PC-9 (cell line): ENCODE measurements at regions of chr7 and their contacts with region 1.

Region 1: DNA sequence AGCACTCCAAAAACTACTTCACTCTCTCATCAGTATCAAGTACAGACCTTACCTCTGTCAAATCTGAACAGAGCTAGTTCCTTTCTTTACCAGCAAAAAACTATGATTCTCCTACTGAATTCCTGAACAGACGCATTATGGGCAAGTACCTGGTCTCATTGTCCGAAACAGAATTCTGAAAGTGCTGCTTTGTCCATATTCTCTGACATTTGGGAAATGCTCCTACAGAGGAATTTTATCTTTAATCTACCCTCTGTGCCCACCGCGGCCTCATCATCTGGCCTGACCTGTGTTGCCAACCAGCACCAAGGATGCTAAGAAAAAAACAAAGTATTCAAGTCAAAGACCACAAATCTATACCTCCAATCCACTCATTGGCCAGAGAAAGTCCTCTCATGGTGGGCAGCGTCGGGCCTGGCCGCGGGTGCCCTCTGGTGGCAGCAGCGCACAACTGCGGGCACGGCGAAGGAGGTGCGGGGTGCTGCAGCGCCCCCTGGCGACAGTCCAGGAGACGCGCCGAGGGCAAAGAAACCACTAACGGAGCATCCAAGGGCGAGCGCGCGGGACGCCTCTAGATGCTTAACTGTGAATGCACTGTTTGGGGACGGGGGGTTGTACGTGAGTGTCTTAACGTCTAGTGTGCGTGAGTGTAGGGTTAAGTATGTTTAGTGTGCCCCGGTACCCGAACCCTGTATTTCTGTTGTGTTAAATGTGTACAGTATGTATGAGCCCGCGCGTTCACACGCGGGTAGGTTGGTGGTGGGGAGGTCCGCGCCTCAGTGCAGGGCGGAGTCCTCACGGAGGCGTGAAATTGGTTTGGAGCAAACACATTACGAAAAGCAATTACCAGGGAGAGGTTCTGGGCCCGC is 5.0 kb upstream of the GBX1 start:
- DNase-seq: peak; percentile 46 to 82
- H3K4me3 ChIP-seq: no peak overlapping the region
- H3K27ac ChIP-seq: no peak overlapping the region
- H3K4me1 ChIP-seq: no peaks in the 10 kb centered on the region
- H3K27me3 ChIP-seq: peaks cover 61% of the 10 kb centered on the region
- CTCF ChIP-seq: peak; percentile 100

Region 2: DNA sequence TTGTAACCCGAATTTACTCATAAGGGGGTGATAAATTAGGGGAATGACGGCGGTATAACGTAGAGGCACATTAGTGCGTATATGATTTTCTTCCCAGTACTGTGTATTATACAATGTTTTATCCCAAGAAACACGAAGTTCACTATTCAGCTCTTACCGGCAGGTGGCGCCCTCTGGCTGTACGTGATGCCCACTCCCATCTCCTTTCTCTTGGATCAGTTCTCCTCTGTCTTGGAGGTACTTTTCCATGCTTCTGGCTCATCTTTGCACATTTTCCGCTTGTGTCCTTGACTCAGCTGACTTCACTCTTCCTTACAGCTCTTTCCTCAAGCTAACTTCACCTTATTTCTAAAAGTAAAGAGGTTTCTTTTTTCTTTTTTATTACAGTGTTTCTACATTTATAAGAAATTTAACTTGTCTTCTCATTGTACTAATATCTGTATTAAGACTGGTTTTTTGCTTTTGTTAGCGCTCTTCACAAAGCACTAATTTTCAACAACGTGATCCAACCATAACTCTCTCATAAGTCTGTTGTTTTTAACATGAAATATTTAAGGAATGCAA is 393.7 kb before region 1 on chr7:
- CTCF ChIA-PET with region 1: no interaction called
- POLR2A ChIA-PET with region 1: no interaction called
- intact Hi-C with region 1: loop called (anchors 1 kb)
- DNase-seq: peak; percentile 50 to 77
- H3K4me3 ChIP-seq: no peak overlapping the region
- H3K27ac ChIP-seq: no peak overlapping the region
- H3K4me1 ChIP-seq: no peaks in the 10 kb centered on the region
- H3K27me3 ChIP-seq: peaks cover 43% of the 10 kb centered on the region
- CTCF ChIP-seq: peak; percentile 91

Region 3: GRCh38 chr7:150898475-150899011 is 274.0 kb before region 1 on chr7:
- CTCF ChIA-PET with region 1: interaction called, 5 read pairs
- POLR2A ChIA-PET with region 1: no interaction called
- intact Hi-C with region 1: loop called (anchors 1 kb)
- DNase-seq: peak in 1 of 2 experiments; percentile 82
- H3K4me3 ChIP-seq: no peak overlapping the region
- H3K27ac ChIP-seq: no peak overlapping the region
- H3K4me1 ChIP-seq: no peaks in the 10 kb centered on the region
- H3K27me3 ChIP-seq: peaks cover 29% of the 10 kb centered on the region
- CTCF ChIP-seq: peak; percentile 95

Region 4: DNA sequence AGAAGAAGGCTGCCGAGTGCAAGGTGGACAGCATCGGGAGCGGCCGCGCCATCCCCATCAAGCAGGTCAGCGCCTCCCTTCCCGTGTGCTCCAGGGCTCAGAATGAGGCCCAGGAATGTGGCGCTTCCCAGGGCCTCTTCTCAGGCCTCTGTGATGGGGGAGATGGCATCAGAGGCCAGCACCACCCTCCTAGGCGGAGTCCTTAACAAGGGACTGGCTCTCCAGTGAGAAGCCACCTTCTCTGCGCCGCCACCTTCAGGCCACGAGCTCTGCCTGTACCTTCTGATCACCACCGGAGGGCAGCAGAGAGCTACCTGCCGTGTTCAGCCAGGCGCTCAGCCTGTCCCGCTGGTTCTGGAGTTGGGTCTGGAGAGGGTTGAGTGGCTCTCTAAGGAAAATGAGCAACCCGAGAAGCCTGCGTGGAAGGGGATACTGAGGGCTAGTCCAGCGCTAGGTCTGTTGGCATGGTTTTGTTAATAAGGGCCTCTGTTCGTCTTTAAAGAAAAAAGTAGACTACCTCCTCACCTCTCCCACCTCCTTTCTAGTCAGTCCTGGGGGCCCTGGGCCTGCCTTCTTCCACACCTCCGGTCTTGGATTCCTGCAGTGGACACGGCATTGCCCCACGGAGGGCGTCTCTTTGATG is 48.6 kb before region 1 on chr7:
- CTCF ChIA-PET with region 1: interaction called, 4 read pairs
- POLR2A ChIA-PET with region 1: no interaction called
- intact Hi-C with region 1: loop called (anchors 1 kb)
- DNase-seq: peak; percentile 55 to 86
- H3K4me3 ChIP-seq: no peak overlapping the region
- H3K27ac ChIP-seq: no peak overlapping the region
- H3K4me1 ChIP-seq: no peaks in the 10 kb centered on the region
- H3K27me3 ChIP-seq: no peaks in the 10 kb centered on the region
- CTCF ChIP-seq: peak; percentile 99

Region 5: DNA sequence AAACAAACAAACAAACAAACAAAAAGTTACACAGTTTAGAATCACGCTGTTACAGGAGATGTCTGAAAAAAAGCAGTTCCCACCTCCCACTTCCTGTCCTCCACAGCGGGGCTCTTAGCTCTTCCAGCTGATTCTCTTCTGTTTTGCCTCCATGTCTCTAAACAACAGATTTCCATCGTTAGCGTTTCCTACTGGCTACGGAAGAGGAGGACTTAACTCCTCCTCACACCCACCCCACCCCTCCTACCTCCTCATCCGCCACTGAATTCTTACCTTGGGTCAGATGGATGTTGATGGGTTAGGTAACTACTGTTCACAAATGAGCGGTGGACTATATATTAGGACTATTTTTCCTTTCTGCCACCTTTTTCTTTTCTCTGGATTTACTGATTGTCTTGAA is 132.3 kb after region 1 on chr7:
- CTCF ChIA-PET with region 1: no interaction called
- POLR2A ChIA-PET with region 1: no interaction called
- intact Hi-C with region 1: loop called (anchors 2 kb)
- DNase-seq: no peak
- H3K4me3 ChIP-seq: no peak overlapping the region
- H3K27ac ChIP-seq: no peak overlapping the region
- H3K4me1 ChIP-seq: no peaks in the 10 kb centered on the region
- H3K27me3 ChIP-seq: peaks cover 96% of the 10 kb centered on the region
- CTCF ChIP-seq: no peak